Heart left ventricle (tissue), 16 donors: ENCODE measurements at regions of chr7 and their contacts with region 1.

Region 1: DNA sequence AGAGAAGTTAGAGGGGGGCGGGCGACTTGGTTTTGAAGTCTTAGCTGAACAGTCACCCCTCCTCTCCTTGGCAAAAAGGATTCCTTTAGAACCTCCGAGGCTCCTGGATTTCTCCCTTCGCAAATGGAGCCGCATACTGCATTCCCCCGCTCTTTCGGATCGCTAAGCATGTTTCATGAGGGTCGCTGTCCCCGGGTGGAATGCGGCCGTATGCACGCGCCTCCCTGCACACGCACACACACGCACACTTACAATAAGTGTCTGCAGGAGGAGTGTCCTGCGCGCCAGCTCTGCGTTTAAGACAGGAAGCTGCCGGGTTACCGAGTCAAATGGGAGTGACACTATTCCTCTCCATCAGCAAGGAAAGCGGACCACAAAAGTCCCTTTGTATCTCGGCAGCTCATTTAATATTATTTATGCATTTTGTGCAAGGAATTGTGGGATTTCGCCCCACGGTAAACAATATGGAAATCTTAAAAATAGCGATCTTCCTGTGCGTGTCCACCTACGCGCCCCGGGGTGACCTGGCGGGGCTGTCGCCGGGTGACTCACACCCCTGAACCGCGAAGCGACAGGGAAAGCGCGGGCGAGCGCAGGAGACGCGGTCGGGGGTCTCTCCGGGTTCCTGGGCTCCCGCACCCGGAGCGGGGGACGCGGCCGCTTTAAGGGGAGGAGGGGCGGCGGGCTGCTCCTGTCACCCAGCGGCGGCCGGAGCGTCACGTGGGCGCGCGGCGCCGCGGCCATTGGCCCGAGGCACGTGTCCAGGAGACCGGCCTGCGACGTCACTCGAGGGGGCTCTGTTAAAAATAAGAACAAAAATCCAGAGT is 978 bp upstream of the EN2 start:
- DNase-seq: peak; percentile 57 to 80 (median 65)
- ATAC-seq: peak; percentile 44 to 88 (median 86)
- H3K4me3 ChIP-seq: peak overlapping the region; percentile 20 to 63 (median 52)
- H3K27ac ChIP-seq: no peak overlapping the region
- H3K4me1 ChIP-seq: peaks cover 0 to 49% (median 25%) of the 10 kb centered on the region in 12 donors
- H3K27me3 ChIP-seq: peaks cover 92 to 96% (median 95%) of the 10 kb centered on the region in 9 donors
- CTCF ChIP-seq: no peak
- POLR2A ChIP-seq: no peak

Region 2: DNA sequence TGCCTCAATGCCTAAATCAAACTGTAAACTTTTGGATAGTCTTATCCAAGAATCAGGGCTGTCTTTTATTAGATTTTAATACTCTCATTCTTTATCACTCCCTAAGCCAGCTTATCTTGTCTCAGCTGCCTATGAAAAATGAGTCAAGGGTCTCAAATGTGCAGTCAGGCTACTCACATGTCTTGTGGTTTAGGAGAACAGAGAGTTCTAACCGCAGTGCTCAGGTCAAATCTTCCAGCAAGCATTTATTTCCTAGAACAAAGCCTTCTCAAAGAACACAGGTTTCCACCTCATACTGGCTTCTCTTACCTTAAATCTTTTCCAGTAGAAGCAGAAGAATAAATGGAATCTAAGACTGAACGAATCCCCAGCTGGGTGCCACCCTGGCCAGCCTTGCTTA is 363.4 kb before region 1 on chr7:
- intact Hi-C with region 1: no loop called
- DNase-seq: no peak
- ATAC-seq: no peak
- H3K4me3 ChIP-seq: no peak overlapping the region
- H3K27ac ChIP-seq: no peak overlapping the region
- H3K4me1 ChIP-seq: no peaks in the 10 kb centered on the region
- H3K27me3 ChIP-seq: peaks cover 0 to 8% (median 0%) of the 10 kb centered on the region in 9 donors
- CTCF ChIP-seq: no peak
- POLR2A ChIP-seq: no peak

Region 3: GRCh38 chr7:155247479-155248365 is 209.2 kb before region 1 on chr7:
- intact Hi-C with region 1: no loop called
- DNase-seq: no peak
- ATAC-seq: no peak
- H3K4me3 ChIP-seq: no peak overlapping the region
- H3K27ac ChIP-seq: no peak overlapping the region
- H3K4me1 ChIP-seq: no peaks in the 10 kb centered on the region
- H3K27me3 ChIP-seq: peaks cover 0 to 18% (median 2%) of the 10 kb centered on the region in 9 donors
- CTCF ChIP-seq: no peak
- POLR2A ChIP-seq: no peak

Region 4: GRCh38 chr7:155371884-155372781 is 84.8 kb before region 1 on chr7:
- intact Hi-C with region 1: loop called in 1 of 10 experiments (anchors 10 kb)
- DNase-seq: no peak
- ATAC-seq: peak in 3 of 4 donors; percentile 33 to 59 (median 41)
- H3K4me3 ChIP-seq: peak overlapping the region in 2 of 12 donors; percentile 15 to 41
- H3K27ac ChIP-seq: no peak overlapping the region
- H3K4me1 ChIP-seq: peaks cover 0 to 48% (median 34%) of the 10 kb centered on the region in 12 donors
- H3K27me3 ChIP-seq: peaks cover 46 to 84% (median 77%) of the 10 kb centered on the region in 9 donors
- CTCF ChIP-seq: peak in 11 of 12 donors; percentile 7 to 44 (median 27)
- POLR2A ChIP-seq: no peak

Region 5: GRCh38 chr7:155506854-155507337 is 49.9 kb after region 1 on chr7:
- intact Hi-C with region 1: loop called in 1 of 10 experiments (anchors 10 kb)
- DNase-seq: no peak
- ATAC-seq: no peak
- H3K4me3 ChIP-seq: no peak overlapping the region
- H3K27ac ChIP-seq: no peak overlapping the region
- H3K4me1 ChIP-seq: peaks cover 0 to 10% (median 0%) of the 10 kb centered on the region in 12 donors
- H3K27me3 ChIP-seq: peaks cover 57 to 100% (median 96%) of the 10 kb centered on the region in 9 donors
- CTCF ChIP-seq: no peak
- POLR2A ChIP-seq: no peak

Region 6: DNA sequence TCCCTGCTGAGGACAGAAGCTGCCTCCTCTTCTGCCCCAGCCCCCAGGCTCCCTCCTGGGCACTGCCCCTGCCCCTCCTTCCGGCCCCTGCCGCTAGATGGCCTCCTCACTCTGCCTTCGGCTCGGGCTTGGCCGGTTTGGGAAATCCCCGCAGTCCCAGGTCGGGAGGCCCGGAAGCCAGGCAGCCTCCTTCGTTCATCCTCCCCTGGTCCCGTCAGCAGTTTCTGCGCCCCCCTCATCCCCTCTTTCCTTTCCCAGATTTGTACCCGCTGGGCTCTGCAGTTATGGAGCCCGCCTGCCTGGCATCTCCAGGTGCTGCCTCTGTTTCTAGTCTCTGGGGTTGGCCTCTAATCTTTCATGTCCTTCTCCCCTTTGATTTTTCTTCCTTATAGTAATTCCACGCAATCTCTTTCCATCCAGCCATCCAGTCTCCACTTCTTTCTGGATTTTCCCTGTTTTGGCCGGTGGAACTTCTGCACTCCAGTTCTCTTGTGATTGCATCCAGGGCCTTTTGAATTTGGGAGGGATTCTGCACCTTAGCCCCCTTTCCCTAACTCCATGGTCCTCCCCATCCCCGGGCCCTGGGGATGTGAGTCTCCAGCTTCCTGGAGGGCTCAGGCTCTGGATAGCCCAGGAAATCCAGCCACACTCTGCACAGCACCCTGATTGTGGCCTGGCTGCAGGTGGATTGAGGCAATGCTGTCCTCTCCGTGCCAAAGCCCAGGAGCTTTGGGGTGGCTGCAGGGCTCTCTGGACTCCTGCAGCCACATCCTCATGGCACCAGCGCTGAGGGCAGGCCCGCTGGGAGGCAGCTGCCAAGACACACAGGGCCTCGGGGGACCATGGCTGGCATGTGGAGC is 358.6 kb after region 1 on chr7:
- intact Hi-C with region 1: no loop called
- DNase-seq: peak in 4 of 5 donors; percentile 27 to 75 (median 33)
- ATAC-seq: peak; percentile 58 to 81 (median 70)
- H3K4me3 ChIP-seq: no peak overlapping the region
- H3K27ac ChIP-seq: no peak overlapping the region
- H3K4me1 ChIP-seq: peaks cover 0 to 11% (median under 1%) of the 10 kb centered on the region in 12 donors
- H3K27me3 ChIP-seq: peaks cover 31 to 96% (median 61%) of the 10 kb centered on the region in 9 donors
- CTCF ChIP-seq: peak; percentile 13 to 59 (median 44)
- POLR2A ChIP-seq: no peak